Natural killer cell (primary cell): ENCODE measurements at regions of chr10 and their contacts with region 1.

Region 1: GRCh38 chr10:3948843-3949242 is 163.8 kb upstream of the KLF6 start:
- DNase-seq: peak; percentile 60 to 91
- ATAC-seq: peak; percentile 75 to 85 (median 85)
- H3K4me3 ChIP-seq: no peak overlapping the region
- H3K4me3 Mint-ChIP-seq: peak overlapping the region; percentile 81
- H3K27ac ChIP-seq: peak overlapping the region; percentile 63
- H3K27ac Mint-ChIP-seq: peak overlapping the region; percentile 83 to 85
- H3K4me1 ChIP-seq: peaks cover 52% of the 10 kb centered on the region
- H3K4me1 Mint-ChIP-seq: peaks cover 61 to 64% of the 10 kb centered on the region in 2 donors
- H3K27me3 ChIP-seq: no peaks in the 10 kb centered on the region
- H3K27me3 Mint-ChIP-seq: no peaks in the 10 kb centered on the region
- CTCF ChIP-seq: no peak

Region 2: GRCh38 chr10:2202401-2202800 is 1746.4 kb before region 1 on chr10:
- intact Hi-C with region 1: no loop called
- DNase-seq: no peak
- ATAC-seq: no peak
- H3K4me3 ChIP-seq: no peak overlapping the region
- H3K4me3 Mint-ChIP-seq: no peak overlapping the region
- H3K27ac ChIP-seq: no peak overlapping the region
- H3K27ac Mint-ChIP-seq: no peak overlapping the region
- H3K4me1 ChIP-seq: no peaks in the 10 kb centered on the region
- H3K4me1 Mint-ChIP-seq: no peaks in the 10 kb centered on the region
- H3K27me3 ChIP-seq: no peaks in the 10 kb centered on the region
- H3K27me3 Mint-ChIP-seq: no peaks in the 10 kb centered on the region
- CTCF ChIP-seq: no peak

Region 3: GRCh38 chr10:3226960-3227744 is 721.7 kb before region 1 on chr10:
- intact Hi-C with region 1: loop called (anchors 10 kb)
- DNase-seq: no peak
- ATAC-seq: peak in 2 of 3 donors; percentile 1 to 7
- H3K4me3 ChIP-seq: no peak overlapping the region
- H3K4me3 Mint-ChIP-seq: peak overlapping the region; percentile 49
- H3K27ac ChIP-seq: no peak overlapping the region
- H3K27ac Mint-ChIP-seq: peak overlapping the region; percentile 69 to 90
- H3K4me1 ChIP-seq: peaks cover 21% of the 10 kb centered on the region
- H3K4me1 Mint-ChIP-seq: no peaks in the 10 kb centered on the region
- H3K27me3 ChIP-seq: no peaks in the 10 kb centered on the region
- H3K27me3 Mint-ChIP-seq: peaks cover 7 to 14% of the 10 kb centered on the region in 2 donors
- CTCF ChIP-seq: no peak

Region 4: GRCh38 chr10:3729397-3729976 is 219.4 kb before region 1 on chr10:
- intact Hi-C with region 1: no loop called
- DNase-seq: no peak
- ATAC-seq: no peak
- H3K4me3 ChIP-seq: no peak overlapping the region
- H3K4me3 Mint-ChIP-seq: no peak overlapping the region
- H3K27ac ChIP-seq: no peak overlapping the region
- H3K27ac Mint-ChIP-seq: no peak overlapping the region
- H3K4me1 ChIP-seq: peaks cover 4% of the 10 kb centered on the region
- H3K4me1 Mint-ChIP-seq: no peaks in the 10 kb centered on the region
- H3K27me3 ChIP-seq: no peaks in the 10 kb centered on the region
- H3K27me3 Mint-ChIP-seq: peaks cover 13 to 14% of the 10 kb centered on the region in 2 donors
- CTCF ChIP-seq: no peak

Region 5: GRCh38 chr10:3785257-3785850 is 163.5 kb before region 1 on chr10:
- intact Hi-C with region 1: loop called (anchors 1 kb)
- DNase-seq: peak; percentile 99 to 100
- ATAC-seq: peak; percentile 64 to 88 (median 76)
- H3K4me3 ChIP-seq: peak overlapping the region; percentile 86
- H3K4me3 Mint-ChIP-seq: peak overlapping the region; percentile 99
- H3K27ac ChIP-seq: peak overlapping the region; percentile 93
- H3K27ac Mint-ChIP-seq: peak overlapping the region; percentile 100
- H3K4me1 ChIP-seq: peaks cover 22% of the 10 kb centered on the region
- H3K4me1 Mint-ChIP-seq: peaks cover 49 to 56% of the 10 kb centered on the region in 2 donors
- H3K27me3 ChIP-seq: no peaks in the 10 kb centered on the region
- H3K27me3 Mint-ChIP-seq: peaks cover 0 to 8% of the 10 kb centered on the region in 2 donors
- CTCF ChIP-seq: no peak

Region 6: GRCh38 chr10:3873728-3874461 is 74.9 kb before region 1 on chr10:
- intact Hi-C with region 1: loop called (anchors 5 kb)
- DNase-seq: peak in 1 of 2 donors; percentile 89
- ATAC-seq: peak; percentile 76 to 80 (median 78)
- H3K4me3 ChIP-seq: no peak overlapping the region
- H3K4me3 Mint-ChIP-seq: peak overlapping the region; percentile 33
- H3K27ac ChIP-seq: peak overlapping the region; percentile 89
- H3K27ac Mint-ChIP-seq: peak overlapping the region; percentile 83 to 90
- H3K4me1 ChIP-seq: peaks cover 29% of the 10 kb centered on the region
- H3K4me1 Mint-ChIP-seq: peaks cover 24 to 42% of the 10 kb centered on the region in 2 donors
- H3K27me3 ChIP-seq: no peaks in the 10 kb centered on the region
- H3K27me3 Mint-ChIP-seq: no peaks in the 10 kb centered on the region
- CTCF ChIP-seq: no peak

Region 7: GRCh38 chr10:3961082-3961481 is 12.2 kb after region 1 on chr10:
- intact Hi-C with region 1: loop called (anchors 1 kb)
- DNase-seq: peak; percentile 46 to 83
- ATAC-seq: peak; percentile 92 to 100 (median 94)
- H3K4me3 ChIP-seq: no peak overlapping the region
- H3K4me3 Mint-ChIP-seq: peak overlapping the region; percentile 75
- H3K27ac ChIP-seq: peak overlapping the region; percentile 26
- H3K27ac Mint-ChIP-seq: peak overlapping the region; percentile 82 to 89
- H3K4me1 ChIP-seq: peaks cover 41% of the 10 kb centered on the region
- H3K4me1 Mint-ChIP-seq: peaks cover 18 to 37% of the 10 kb centered on the region in 2 donors
- H3K27me3 ChIP-seq: no peaks in the 10 kb centered on the region
- H3K27me3 Mint-ChIP-seq: no peaks in the 10 kb centered on the region
- CTCF ChIP-seq: no peak

Region 8: DNA sequence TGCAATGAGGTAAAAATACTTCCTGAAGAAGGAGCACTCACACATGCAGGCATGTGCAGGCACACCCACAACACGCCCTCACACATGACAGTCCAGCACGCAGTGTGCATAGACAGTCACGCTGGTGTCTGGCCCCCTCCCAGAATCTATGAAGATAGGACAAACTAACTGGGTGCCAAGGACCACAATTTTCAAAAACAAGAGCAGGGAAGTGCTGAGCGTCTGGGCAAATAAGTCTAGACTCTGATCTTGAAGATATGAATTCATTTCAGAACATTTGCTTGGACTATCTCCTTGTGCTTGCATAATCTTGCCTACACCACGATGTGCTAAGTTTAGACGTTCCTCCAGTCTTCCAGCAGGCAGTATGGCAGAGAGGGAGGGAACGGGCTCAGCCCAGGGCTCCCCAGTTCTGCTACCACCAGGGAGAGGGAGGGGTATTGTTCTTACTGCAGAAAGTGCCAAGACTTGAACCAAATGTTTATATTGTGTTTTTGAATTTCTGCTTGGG is 112.7 kb after region 1 on chr10:
- intact Hi-C with region 1: no loop called
- DNase-seq: peak in 1 of 2 donors; percentile 23
- ATAC-seq: no peak
- H3K4me3 ChIP-seq: no peak overlapping the region
- H3K4me3 Mint-ChIP-seq: no peak overlapping the region
- H3K27ac ChIP-seq: no peak overlapping the region
- H3K27ac Mint-ChIP-seq: no peak overlapping the region
- H3K4me1 ChIP-seq: peaks cover 17% of the 10 kb centered on the region
- H3K4me1 Mint-ChIP-seq: peaks cover 6 to 8% of the 10 kb centered on the region in 2 donors
- H3K27me3 ChIP-seq: no peaks in the 10 kb centered on the region
- H3K27me3 Mint-ChIP-seq: no peaks in the 10 kb centered on the region
- CTCF ChIP-seq: no peak

Region 9: DNA sequence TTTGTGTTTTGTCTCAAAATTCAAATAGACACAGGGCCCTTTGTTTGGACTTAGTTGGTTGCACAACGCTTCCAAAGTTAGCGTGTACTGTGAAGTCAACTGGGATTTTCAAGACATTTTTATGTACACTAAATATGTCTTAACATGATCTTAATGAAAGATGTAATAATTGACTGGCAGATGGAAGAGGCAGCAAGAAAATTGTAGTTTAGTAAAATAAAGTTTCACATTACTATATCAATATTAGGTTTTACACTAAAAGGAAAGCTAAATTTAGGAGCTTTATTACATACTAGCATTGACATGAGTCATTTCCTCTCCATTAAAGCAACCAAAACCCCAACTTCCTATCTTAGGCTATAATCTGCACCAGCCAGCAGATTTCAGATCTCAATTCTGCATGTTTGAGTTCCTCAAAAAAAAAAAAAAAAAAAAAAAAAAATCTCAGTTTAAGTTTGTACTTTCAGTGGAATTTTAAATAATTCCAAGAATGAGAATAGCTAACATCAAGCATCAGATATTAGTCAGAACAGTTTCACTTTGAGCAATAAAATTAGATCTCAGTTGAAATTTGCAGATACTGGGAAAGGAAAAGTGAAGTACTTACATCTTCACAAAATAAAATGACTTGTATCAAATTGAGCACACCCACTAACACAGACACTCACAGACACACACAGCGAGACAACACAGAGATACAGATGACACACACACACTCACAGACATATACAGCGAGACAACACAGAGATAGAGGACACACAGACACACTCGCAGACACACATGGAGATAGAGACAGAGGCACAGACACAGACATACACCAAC is 182.8 kb after region 1 on chr10:
- intact Hi-C with region 1: loop called (anchors 5 kb)
- DNase-seq: peak in 1 of 2 donors; percentile 80
- ATAC-seq: peak; percentile 88 to 93 (median 91)
- H3K4me3 ChIP-seq: no peak overlapping the region
- H3K4me3 Mint-ChIP-seq: no peak overlapping the region
- H3K27ac ChIP-seq: peak overlapping the region; percentile 60
- H3K27ac Mint-ChIP-seq: no peak overlapping the region
- H3K4me1 ChIP-seq: peaks cover 31% of the 10 kb centered on the region
- H3K4me1 Mint-ChIP-seq: peaks cover 39 to 46% of the 10 kb centered on the region in 2 donors
- H3K27me3 ChIP-seq: no peaks in the 10 kb centered on the region
- H3K27me3 Mint-ChIP-seq: no peaks in the 10 kb centered on the region
- CTCF ChIP-seq: no peak